Right ventricle myocardium inferior (tissue), 1 donor: ENCODE measurements at regions of chr2 and their contacts with region 1.

Region 1: GRCh38 chr2:160870729-160871465 is 289.3 kb upstream of the TANK start:
- DNase-seq: no peak
- ATAC-seq: peak; percentile 69

Region 2: DNA sequence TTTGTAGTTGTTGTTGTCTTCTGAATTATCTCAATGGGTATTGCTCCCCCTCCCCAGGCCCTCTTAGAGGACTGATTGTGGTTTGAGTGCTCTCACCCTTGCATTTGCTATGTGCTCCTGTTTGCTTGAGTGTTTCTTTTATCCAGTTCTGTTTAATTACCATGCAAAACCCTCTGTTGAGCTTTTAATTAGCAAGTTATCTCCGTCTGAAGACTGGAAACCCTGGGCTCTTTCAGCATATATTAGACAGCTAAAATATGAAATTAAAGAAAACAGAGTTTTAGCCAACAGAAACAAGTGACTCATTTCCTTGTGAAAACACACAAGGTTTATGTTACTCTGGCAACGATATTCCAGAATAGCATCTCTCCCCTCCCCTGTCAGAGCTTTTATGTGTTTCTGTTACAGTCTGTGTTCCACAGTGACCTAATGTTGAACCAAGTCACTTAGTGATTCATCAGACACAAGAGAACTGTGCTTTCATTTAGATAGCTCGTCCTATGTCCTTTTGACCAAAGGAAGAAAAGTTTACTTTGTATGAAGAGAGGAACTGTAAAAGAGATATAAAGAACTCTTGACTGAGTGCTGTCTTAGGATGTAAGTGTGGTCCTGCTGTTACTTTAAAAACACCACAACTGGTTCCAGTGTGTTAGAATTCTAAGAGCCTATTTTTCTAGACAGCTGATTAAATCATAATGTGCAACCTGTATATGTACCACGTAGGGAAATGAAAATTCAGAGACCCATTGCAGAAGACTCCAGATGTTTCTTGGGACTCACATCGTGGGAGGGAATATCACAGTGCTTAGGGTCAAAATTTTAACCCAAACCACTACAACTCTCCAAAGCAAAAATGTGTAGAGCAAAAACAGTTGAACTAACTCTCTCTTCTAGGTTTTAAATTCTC is 204.5 kb before region 1 on chr2:
- intact Hi-C with region 1: loop called (anchors 10 kb)
- DNase-seq: no peak
- ATAC-seq: peak; percentile 98

Region 3: GRCh38 chr2:160784023-160784422 is 86.9 kb before region 1 on chr2:
- intact Hi-C with region 1: no loop called
- DNase-seq: no peak
- ATAC-seq: no peak